MCF 10A (cell line): ENCODE measurements at regions of chr3 and their contacts with region 1.

Region 1: GRCh38 chr3:113844622-113845222 is 6.1 kb downstream of the GRAMD1C start:
- DNase-seq: peak; percentile 65
- H3K4me3 Mint-ChIP-seq: no peak overlapping the region
- H3K27ac Mint-ChIP-seq: no peak overlapping the region
- H3K4me1 Mint-ChIP-seq: no peaks in the 10 kb centered on the region
- H3K27me3 Mint-ChIP-seq: no peaks in the 10 kb centered on the region
- CTCF ChIP-seq: peak; percentile 36

Region 2: GRCh38 chr3:113736548-113737089 is 108.1 kb before region 1 on chr3:
- CTCF ChIA-PET with region 1: interaction called, 17 read pairs
- POLR2A ChIA-PET with region 1: no interaction called
- intact Hi-C with region 1: no loop called
- DNase-seq: peak; percentile 68
- H3K4me3 Mint-ChIP-seq: no peak overlapping the region
- H3K27ac Mint-ChIP-seq: peak overlapping the region; percentile 59
- H3K4me1 Mint-ChIP-seq: peaks cover 52% of the 10 kb centered on the region
- H3K27me3 Mint-ChIP-seq: no peaks in the 10 kb centered on the region
- CTCF ChIP-seq: peak; percentile 57

Region 3: DNA sequence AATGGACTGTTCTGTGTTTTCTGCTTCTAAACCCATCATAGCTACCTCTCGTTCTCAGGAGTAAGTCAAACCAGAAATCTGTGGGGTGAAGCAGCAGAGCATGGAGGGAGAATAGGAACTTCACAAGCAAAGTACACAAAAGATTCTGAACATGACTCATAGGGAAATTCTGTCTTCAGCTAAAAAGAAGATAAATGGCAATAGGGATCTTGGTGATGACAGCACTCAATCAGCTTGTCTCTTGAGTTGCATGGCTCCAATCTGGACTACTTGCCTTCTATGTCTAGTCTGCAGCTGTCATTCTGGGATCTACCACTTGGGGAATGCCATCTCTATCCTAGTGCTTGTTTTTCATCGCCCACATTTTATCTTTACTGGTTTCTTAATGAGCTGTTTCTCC is 19.6 kb before region 1 on chr3:
- CTCF ChIA-PET with region 1: interaction called, 13 read pairs
- POLR2A ChIA-PET with region 1: no interaction called
- intact Hi-C with region 1: no loop called
- DNase-seq: peak; percentile 35
- H3K4me3 Mint-ChIP-seq: no peak overlapping the region
- H3K27ac Mint-ChIP-seq: no peak overlapping the region
- H3K4me1 Mint-ChIP-seq: peaks cover 8% of the 10 kb centered on the region
- H3K27me3 Mint-ChIP-seq: no peaks in the 10 kb centered on the region
- CTCF ChIP-seq: no peak

Region 4: DNA sequence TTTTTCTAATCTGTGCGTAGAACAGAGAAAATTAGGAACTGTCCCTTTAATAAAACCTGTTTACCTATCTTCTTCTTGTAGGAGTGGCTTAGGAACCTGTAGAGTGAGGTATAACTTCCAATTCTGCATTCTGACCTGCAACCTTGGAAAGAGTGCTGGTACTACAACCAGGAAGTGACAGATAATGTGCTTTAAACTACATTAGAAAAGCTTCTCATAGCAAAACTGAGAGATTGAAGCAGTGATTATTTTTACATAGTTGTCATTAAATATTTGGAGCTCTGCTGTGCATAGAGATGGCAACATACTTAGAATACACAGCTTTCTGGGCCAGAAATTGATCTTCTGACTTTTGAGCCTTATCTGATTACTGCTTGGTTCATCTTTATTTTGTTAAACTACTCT is 52.7 kb after region 1 on chr3:
- CTCF ChIA-PET with region 1: interaction called, 39 read pairs
- POLR2A ChIA-PET with region 1: interaction called, 10 read pairs
- intact Hi-C with region 1: no loop called
- DNase-seq: peak; percentile 33
- H3K4me3 Mint-ChIP-seq: peak overlapping the region; percentile 64
- H3K27ac Mint-ChIP-seq: no peak overlapping the region
- H3K4me1 Mint-ChIP-seq: peaks cover 14% of the 10 kb centered on the region
- H3K27me3 Mint-ChIP-seq: no peaks in the 10 kb centered on the region
- CTCF ChIP-seq: no peak

Region 5: GRCh38 chr3:113912552-113913236 is 68.0 kb after region 1 on chr3:
- CTCF ChIA-PET with region 1: interaction called, 313 read pairs
- POLR2A ChIA-PET with region 1: interaction called, 10 read pairs
- intact Hi-C with region 1: loop called (anchors 1 kb)
- DNase-seq: peak; percentile 82
- H3K4me3 Mint-ChIP-seq: no peak overlapping the region
- H3K27ac Mint-ChIP-seq: no peak overlapping the region
- H3K4me1 Mint-ChIP-seq: no peaks in the 10 kb centered on the region
- H3K27me3 Mint-ChIP-seq: no peaks in the 10 kb centered on the region
- CTCF ChIP-seq: peak; percentile 63

Region 6: GRCh38 chr3:114152519-114153151 is 307.9 kb after region 1 on chr3:
- CTCF ChIA-PET with region 1: no interaction called
- POLR2A ChIA-PET with region 1: no interaction called
- intact Hi-C with region 1: loop called (anchors 10 kb)
- DNase-seq: peak; percentile 75
- H3K4me3 Mint-ChIP-seq: peak overlapping the region; percentile 66
- H3K27ac Mint-ChIP-seq: no peak overlapping the region
- H3K4me1 Mint-ChIP-seq: peaks cover 7% of the 10 kb centered on the region
- H3K27me3 Mint-ChIP-seq: peaks cover 24% of the 10 kb centered on the region
- CTCF ChIP-seq: peak; percentile 84

Region 7: GRCh38 chr3:114336122-114336697 is 491.5 kb after region 1 on chr3:
- CTCF ChIA-PET with region 1: interaction called, 3 read pairs
- POLR2A ChIA-PET with region 1: no interaction called
- intact Hi-C with region 1: loop called (anchors 10 kb)
- DNase-seq: no peak
- H3K4me3 Mint-ChIP-seq: no peak overlapping the region
- H3K27ac Mint-ChIP-seq: no peak overlapping the region
- H3K4me1 Mint-ChIP-seq: no peaks in the 10 kb centered on the region
- H3K27me3 Mint-ChIP-seq: no peaks in the 10 kb centered on the region
- CTCF ChIP-seq: peak; percentile 30